Activated B cell treated with CpG ODN at 0.5 μM for 24 hours (primary cell): ENCODE measurements at regions of chr9 and their contacts with region 1.

Region 1: DNA sequence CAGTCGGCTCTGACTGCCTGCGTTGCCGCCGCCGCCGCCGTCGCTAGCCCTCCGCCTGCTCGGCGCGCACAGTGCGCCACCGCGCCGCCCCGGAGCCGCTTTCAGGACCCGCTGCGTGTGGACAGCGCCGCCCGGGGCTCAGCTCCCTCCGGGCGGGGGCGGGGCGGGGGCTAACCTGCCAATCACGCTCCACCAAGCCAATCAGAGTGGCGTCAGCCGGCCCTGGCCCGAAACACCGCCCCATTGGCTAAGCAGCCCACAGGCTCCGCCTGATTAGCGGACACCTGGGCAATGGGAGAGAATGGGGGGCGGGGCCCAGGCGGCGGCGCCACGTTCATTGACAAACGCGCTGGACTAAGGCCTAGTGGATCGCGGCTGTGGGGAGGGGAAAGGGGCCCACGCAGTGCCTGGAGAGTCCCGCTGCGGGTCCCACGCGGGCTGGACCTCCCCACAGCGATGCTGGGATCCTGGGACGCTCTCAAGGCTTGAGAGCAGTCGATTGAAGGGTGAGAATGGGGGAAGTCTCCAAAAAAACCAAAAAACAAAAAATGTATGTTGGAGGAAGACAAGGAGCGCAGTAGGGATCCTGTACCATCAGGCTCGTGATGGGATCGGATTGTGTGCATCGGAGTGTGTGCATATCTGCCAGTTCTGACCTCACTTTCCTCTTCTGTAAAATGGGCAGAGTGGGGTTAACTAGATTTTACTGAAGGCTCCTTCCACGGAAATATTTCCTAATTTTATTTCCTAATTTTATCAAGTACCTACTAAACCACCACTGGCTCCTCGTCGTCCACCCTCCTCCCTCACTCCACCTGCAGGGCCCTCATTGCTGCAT is 6.3 kb downstream of the PAX5 start:
- DNase-seq: peak; percentile 95
- ATAC-seq: peak; percentile 85
- H3K4me3 Mint-ChIP-seq: peak overlapping the region; percentile 90
- H3K27ac Mint-ChIP-seq: peak overlapping the region; percentile 96
- H3K4me1 Mint-ChIP-seq: peaks cover 77% of the 10 kb centered on the region
- H3K27me3 Mint-ChIP-seq: no peaks in the 10 kb centered on the region
- CTCF ChIP-seq: no peak

Region 2: DNA sequence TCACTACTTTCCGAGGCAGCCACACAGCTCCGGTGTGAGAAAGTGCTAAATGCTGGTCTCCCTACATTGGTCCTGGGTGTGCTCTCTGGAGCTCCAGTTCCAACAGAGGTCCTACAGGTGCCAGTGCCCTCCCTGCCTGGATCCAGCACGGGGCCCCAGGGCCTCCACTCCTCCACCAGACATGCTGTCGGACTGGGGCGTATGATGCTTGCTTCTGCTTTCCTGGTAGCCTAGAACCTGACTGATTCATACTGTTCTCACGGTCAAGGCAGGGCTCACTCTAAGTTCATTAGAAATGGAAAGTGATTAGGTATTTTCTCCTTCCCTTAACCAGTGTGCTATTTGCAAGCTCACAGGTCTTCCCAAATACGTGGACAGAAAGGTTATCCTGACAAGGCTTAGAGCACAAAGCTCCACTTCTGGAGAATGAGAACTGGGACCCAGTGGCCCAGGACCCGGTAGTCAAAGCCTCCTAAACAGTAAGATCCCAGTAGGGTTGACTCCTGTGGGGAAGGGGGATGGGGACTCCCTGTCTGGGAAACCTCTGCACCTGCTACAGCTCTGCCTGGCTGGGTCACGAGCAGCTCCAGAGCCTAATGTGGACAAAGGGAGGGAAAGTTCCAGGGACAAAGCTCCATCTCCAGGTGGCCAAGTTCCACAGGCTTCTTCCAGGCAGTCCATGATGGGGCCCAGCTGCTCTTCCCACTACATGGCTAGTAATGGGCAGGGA is 91.9 kb before region 1 on chr9:
- CTCF ChIA-PET with region 1: no interaction called
- POLR2A ChIA-PET with region 1: interaction called, 6 read pairs
- intact Hi-C with region 1: loop called (anchors 5 kb)
- DNase-seq: no peak
- ATAC-seq: peak; percentile 64
- H3K4me3 Mint-ChIP-seq: peak overlapping the region; percentile 44
- H3K27ac Mint-ChIP-seq: peak overlapping the region; percentile 85
- H3K4me1 Mint-ChIP-seq: peaks cover 92% of the 10 kb centered on the region
- H3K27me3 Mint-ChIP-seq: no peaks in the 10 kb centered on the region
- CTCF ChIP-seq: no peak

Region 3: DNA sequence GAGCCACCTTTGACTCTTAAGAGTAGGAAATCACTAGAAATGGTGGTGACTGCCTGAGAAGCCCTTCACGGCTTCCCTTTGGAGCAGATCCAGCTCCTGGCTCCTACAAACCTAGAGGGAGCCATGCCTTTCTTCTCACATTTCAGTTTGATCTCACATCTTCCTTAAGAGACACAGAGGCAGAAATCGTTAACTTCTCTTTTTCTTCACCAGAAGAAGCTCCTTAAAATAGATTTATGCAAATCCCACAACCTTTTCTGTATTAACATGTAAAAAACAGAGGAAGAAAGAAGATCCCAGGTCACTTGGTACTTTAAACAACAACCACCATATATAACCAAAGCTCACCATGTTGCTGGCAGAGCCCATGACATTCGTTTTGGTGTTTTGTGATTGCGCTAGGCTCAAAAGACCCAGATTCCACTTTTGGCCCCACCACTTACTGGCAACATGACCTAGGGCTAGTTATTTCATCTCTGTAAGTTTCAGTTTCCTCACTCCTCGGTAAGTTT is 23.3 kb before region 1 on chr9:
- CTCF ChIA-PET with region 1: interaction called, 4 read pairs
- POLR2A ChIA-PET with region 1: interaction called, 291 read pairs
- intact Hi-C with region 1: loop called (anchors 1 kb)
- DNase-seq: no peak
- ATAC-seq: peak; percentile 37
- H3K4me3 Mint-ChIP-seq: peak overlapping the region; percentile 86
- H3K27ac Mint-ChIP-seq: peak overlapping the region; percentile 84
- H3K4me1 Mint-ChIP-seq: peaks cover 94% of the 10 kb centered on the region
- H3K27me3 Mint-ChIP-seq: no peaks in the 10 kb centered on the region
- CTCF ChIP-seq: no peak

Region 4: DNA sequence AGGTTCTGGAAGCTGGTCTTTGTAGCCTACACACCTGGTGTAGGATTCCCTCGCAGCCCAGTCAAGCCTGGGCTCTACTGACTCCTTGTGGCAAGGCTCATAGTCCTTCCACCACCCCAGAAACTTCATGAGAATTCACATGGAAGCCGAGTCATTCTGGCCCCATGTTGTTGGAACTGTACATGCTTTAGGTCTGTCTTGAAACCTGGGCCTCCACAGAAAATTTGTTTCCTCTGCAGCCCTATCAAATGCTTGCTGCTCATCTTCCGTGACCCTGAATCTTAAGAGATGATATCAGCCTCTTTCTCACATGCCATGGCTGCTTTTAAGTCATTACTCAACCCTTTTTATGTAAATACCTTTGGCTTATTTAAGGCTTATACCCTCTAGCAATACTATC is 281.3 kb after region 1 on chr9:
- CTCF ChIA-PET with region 1: interaction called, 14 read pairs
- POLR2A ChIA-PET with region 1: interaction called, 8 read pairs
- intact Hi-C with region 1: no loop called
- DNase-seq: no peak
- ATAC-seq: peak; percentile 87
- H3K4me3 Mint-ChIP-seq: no peak overlapping the region
- H3K27ac Mint-ChIP-seq: peak overlapping the region; percentile 84
- H3K4me1 Mint-ChIP-seq: peaks cover 43% of the 10 kb centered on the region
- H3K27me3 Mint-ChIP-seq: no peaks in the 10 kb centered on the region
- CTCF ChIP-seq: no peak

Region 5: DNA sequence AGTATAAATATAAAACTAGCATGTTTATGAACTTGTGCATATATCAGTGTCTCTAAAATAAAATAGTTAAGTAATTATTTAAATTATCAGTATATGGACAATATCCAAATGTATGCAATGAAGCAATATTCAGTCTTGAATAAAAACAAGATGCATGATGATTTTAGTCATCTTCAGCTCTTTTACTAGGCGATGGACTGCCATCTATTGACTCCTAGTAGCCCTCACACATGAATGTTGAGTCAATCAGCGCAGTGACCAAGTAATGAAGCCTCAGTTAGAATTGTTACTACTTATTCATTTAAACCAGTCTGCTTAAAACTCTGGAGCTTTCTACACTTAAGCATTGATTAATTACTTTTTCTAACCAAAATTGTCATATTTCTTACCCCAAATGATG is 301.8 kb after region 1 on chr9:
- CTCF ChIA-PET with region 1: interaction called, 15 read pairs
- POLR2A ChIA-PET with region 1: interaction called, 26 read pairs
- intact Hi-C with region 1: no loop called
- DNase-seq: no peak
- ATAC-seq: peak; percentile 47
- H3K4me3 Mint-ChIP-seq: peak overlapping the region; percentile 33
- H3K27ac Mint-ChIP-seq: peak overlapping the region; percentile 83
- H3K4me1 Mint-ChIP-seq: peaks cover 71% of the 10 kb centered on the region
- H3K27me3 Mint-ChIP-seq: no peaks in the 10 kb centered on the region
- CTCF ChIP-seq: no peak

Region 6: GRCh38 chr9:37550781-37551180 is 523.0 kb after region 1 on chr9:
- CTCF ChIA-PET with region 1: no interaction called
- POLR2A ChIA-PET with region 1: no interaction called
- intact Hi-C with region 1: no loop called
- DNase-seq: no peak
- ATAC-seq: no peak
- H3K4me3 Mint-ChIP-seq: no peak overlapping the region
- H3K27ac Mint-ChIP-seq: no peak overlapping the region
- H3K4me1 Mint-ChIP-seq: peaks cover 35% of the 10 kb centered on the region
- H3K27me3 Mint-ChIP-seq: no peaks in the 10 kb centered on the region
- CTCF ChIP-seq: no peak

Region 7: DNA sequence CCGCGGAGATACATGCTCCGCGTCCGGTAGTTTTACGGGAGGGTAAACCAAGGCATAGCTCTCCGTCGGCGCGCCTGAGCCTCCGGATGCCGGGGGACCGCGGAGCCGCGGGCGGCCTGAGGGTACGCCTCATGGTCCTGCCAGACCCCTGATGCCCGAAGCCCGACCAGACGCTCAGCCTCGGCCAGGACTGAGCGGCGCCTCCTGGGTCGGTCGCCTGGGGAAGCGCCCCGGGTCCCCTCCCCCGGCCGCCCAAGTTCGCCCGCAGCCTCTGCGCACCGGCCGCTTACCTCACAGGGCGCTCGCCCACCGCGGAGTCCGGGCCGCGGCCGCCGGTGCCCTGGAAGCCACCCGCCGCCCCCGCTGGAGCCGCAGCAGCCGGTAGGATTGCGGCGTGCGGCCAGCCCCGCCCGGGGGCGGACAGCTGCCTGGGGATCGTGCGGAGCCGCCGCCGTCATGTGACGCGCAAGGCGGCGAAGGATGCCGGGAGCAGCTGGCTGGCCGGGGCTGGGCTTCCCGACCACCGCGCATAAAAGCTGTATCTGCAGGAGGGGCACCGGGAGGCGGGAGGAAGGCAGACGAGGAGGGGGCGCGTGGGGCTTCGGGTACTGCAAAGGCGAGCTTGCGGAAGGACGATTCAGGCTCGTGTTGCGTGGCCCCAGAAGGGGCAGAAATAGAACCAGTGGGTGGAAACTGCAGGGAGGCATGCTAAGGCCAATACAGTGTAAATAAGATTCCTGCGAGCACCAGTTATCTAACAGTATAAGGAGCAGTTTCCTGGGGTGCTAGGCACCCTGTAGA is 548.3 kb after region 1 on chr9 and contains the start of gene FBXO10:
- CTCF ChIA-PET with region 1: no interaction called
- POLR2A ChIA-PET with region 1: interaction called, 6 read pairs
- intact Hi-C with region 1: loop called (anchors 10 kb)
- DNase-seq: peak; percentile 65
- ATAC-seq: peak; percentile 72
- H3K4me3 Mint-ChIP-seq: peak within 1 kb of the TSS; percentile 92
- H3K27ac Mint-ChIP-seq: peak within 1 kb of the TSS; percentile 89
- H3K4me1 Mint-ChIP-seq: peaks cover 47% of the 10 kb centered on the region
- H3K27me3 Mint-ChIP-seq: no peaks in the 10 kb centered on the region
- CTCF ChIP-seq: no peak
- total RNA-seq, gene FBXO10: 29.8 and 39.4 TPM in 2 replicates